PC-9 (cell line): ENCODE measurements at regions of chr11 and their contacts with region 1.

Region 1: DNA sequence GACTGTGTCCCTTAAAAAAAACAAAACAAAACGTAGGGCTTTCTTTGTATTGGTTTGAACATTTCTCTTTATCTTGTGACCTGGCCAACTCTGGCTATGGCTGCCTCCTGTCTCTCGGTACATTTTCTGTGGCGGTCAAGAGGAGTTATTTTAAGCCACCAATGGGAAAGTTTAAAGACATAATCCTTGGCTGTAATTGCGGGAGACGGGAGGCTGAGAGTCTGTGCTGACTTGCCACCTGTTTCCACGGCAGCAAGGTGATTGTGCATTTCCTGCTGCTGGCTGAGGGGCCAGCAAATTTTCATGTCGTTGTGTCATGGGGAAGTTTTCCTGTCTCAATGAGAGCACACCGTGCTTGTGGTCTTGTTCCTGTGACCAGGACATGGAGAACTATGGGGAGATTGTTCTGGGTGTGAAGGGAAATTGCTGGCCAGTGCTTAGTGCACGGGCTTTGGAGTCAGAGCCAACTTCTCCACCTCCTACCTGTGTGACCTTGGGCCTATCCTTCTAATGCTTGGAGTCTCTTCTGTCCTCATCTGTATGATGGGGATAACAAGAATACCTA is 11.0 kb downstream of the PTPRJ start:
- DNase-seq: peak; percentile 70 to 73
- H3K4me3 ChIP-seq: no peak overlapping the region
- H3K27ac ChIP-seq: peak overlapping the region; percentile 62
- H3K4me1 ChIP-seq: peaks cover 59% of the 10 kb centered on the region
- H3K27me3 ChIP-seq: no peaks in the 10 kb centered on the region
- CTCF ChIP-seq: no peak

Region 2: GRCh38 chr11:47917643-47918369 is 73.5 kb before region 1 on chr11:
- CTCF ChIA-PET with region 1: no interaction called
- POLR2A ChIA-PET with region 1: interaction called, 7 read pairs
- intact Hi-C with region 1: loop called (anchors 5 kb)
- DNase-seq: peak; percentile 50 to 92
- H3K4me3 ChIP-seq: no peak overlapping the region
- H3K27ac ChIP-seq: no peak overlapping the region
- H3K4me1 ChIP-seq: peaks cover 41% of the 10 kb centered on the region
- H3K27me3 ChIP-seq: no peaks in the 10 kb centered on the region
- CTCF ChIP-seq: no peak

Region 3: GRCh38 chr11:47973173-47973572 is 18.2 kb before region 1 on chr11:
- CTCF ChIA-PET with region 1: no interaction called
- POLR2A ChIA-PET with region 1: interaction called, 12 read pairs
- intact Hi-C with region 1: no loop called
- DNase-seq: no peak
- H3K4me3 ChIP-seq: no peak overlapping the region
- H3K27ac ChIP-seq: peak overlapping the region; percentile 79
- H3K4me1 ChIP-seq: peaks cover 34% of the 10 kb centered on the region
- H3K27me3 ChIP-seq: no peaks in the 10 kb centered on the region
- CTCF ChIP-seq: no peak

Region 4: DNA sequence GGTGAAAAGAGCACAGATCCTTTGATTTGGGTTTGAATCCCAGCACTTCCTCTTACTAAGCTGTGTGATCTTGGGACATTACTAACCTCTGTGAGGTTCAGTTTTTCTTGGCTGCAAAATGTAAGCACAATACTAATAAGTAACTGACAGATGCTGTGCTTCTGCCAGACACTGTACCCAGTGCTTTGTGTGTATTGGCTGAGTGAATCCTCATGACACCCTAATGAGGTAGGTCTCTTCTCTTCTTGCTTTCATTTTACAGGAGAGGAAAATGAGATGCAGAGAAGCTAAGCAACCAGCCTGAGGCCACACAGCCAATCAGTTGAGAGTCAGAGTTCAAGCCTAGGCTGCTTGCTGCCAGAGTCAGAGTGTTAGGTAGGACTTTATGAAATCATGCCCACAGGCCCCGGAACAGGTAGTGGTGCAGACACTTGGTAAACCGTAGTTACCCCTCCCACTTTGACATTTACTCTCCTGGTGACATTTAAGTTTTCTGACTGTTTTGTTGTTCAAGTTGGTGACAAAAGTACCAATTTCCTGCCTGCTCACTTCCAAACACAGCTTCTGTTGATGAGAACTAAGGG is 10.2 kb after region 1 on chr11:
- CTCF ChIA-PET with region 1: interaction called, 4 read pairs
- POLR2A ChIA-PET with region 1: no interaction called
- intact Hi-C with region 1: loop called (anchors 2 kb)
- DNase-seq: no peak
- H3K4me3 ChIP-seq: no peak overlapping the region
- H3K27ac ChIP-seq: no peak overlapping the region
- H3K4me1 ChIP-seq: peaks cover 27% of the 10 kb centered on the region
- H3K27me3 ChIP-seq: no peaks in the 10 kb centered on the region
- CTCF ChIP-seq: no peak